B cell (primary cell): ENCODE measurements at regions of chr2 and their contacts with region 1.

Region 1: GRCh38 chr2:61905372-61906185 is at the start of gene COMMD1:
- DNase-seq: peak; percentile 87
- ATAC-seq: peak; percentile 99
- H3K4me3 ChIP-seq: peak within 1 kb of the TSS; percentile 61 to 97 (median 87)
- H3K4me3 Mint-ChIP-seq: peak within 1 kb of the TSS; percentile 91
- H3K27ac ChIP-seq: peak within 1 kb of the TSS; percentile 57 to 86
- H3K27ac Mint-ChIP-seq: peak within 1 kb of the TSS; percentile 90
- H3K4me1 ChIP-seq: peaks cover 7 to 8% of the 10 kb centered on the region in 2 donors
- H3K4me1 Mint-ChIP-seq: peaks cover 11% of the 10 kb centered on the region
- H3K27me3 ChIP-seq: no peaks in the 10 kb centered on the region
- H3K27me3 Mint-ChIP-seq: no peaks in the 10 kb centered on the region
- CTCF ChIP-seq: no peak
- total RNA-seq, gene COMMD1: 25.1 and 26.7 TPM in 2 replicates

Region 2: DNA sequence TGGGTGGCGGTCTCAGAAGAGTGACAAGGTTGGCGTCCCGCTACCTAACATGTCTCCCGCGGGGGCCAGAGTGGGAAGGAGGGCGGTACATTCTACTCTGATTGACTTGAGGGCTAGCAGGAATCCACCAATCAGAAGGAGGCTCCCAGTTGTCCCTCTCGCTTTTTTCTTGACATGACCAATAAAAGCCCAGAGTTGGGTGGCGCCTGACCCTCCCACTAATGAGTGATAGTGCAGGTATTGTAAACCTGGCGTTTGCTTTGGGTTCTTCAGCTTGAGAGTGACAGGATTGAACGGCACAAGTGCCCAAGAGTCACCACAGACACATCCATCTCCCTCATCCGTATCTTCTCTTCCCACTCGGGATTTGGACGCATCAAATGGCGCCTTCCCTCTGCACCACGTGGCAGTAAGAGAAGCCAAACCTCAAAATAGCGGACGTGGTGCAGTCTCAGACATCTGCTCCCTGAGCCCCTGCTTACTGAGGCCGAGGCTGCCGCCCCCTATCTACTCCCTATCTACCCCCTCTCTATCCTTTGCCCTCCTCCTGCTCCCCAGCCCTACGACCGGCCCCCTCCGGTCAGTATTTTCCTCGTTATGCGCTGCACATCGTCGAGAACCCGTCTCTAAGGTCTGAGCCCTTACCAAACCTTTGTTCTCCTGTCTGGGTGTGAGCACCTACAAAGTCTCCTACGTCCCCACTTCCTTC is 51.0 kb before region 1 on chr2:
- CTCF ChIA-PET with region 1: no interaction called
- POLR2A ChIA-PET with region 1: interaction called, 3 read pairs
- intact Hi-C with region 1: loop called (anchors 5 kb)
- DNase-seq: peak; percentile 96
- ATAC-seq: peak; percentile 83
- H3K4me3 ChIP-seq: peak overlapping the region; percentile 92 to 99 (median 98)
- H3K4me3 Mint-ChIP-seq: peak overlapping the region; percentile 94
- H3K27ac ChIP-seq: peak overlapping the region; percentile 56 to 68
- H3K27ac Mint-ChIP-seq: peak overlapping the region; percentile 92
- H3K4me1 ChIP-seq: peaks cover 11 to 16% of the 10 kb centered on the region in 2 donors
- H3K4me1 Mint-ChIP-seq: peaks cover 23% of the 10 kb centered on the region
- H3K27me3 ChIP-seq: no peaks in the 10 kb centered on the region
- H3K27me3 Mint-ChIP-seq: no peaks in the 10 kb centered on the region
- CTCF ChIP-seq: no peak

Region 3: DNA sequence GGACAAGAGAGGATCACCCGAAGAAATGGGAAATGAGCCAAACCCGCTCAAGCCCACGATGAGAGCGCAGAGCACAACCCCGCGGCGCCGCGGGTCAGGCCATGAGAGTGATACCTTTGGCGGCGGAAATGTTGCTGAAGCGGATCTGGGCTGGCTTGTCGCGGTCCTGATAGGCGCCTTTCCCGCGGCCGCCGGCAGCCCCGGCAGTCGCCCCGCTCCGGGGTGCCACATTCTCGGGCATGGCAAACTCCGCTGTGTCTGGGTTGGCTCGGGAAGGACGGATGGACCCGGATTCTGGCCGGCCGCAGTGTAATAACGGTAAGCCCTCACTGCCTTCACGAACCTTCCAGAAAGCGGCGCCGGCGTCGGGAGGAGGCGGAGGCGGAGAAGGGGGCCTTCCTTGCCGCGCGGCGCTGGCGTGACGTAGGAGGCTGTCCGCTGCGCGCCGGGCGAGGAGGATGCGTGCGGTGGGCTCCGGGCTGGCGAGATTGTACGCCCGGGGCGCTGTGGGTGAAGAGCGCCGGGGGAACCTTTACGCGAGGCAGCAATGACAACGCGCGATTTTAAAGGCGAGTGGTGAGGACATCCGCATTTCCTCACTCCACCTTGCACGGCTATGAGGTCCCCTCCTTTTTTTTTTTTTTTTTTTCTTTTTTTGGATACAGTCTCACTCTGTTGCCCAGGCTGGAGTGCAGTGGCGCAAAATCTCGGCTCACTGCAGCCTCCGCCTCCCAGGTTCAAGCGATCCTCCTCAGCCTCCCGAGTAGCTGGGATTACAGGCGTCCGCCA is 17.1 kb before region 1 on chr2 and contains the start of gene CCT4:
- CTCF ChIA-PET with region 1: no interaction called
- POLR2A ChIA-PET with region 1: no interaction called
- intact Hi-C with region 1: loop called (anchors 1 kb)
- DNase-seq: peak; percentile 98
- ATAC-seq: peak; percentile 85
- H3K4me3 ChIP-seq: peak within 1 kb of the TSS; percentile 79 to 92 (median 89)
- H3K4me3 Mint-ChIP-seq: peak within 1 kb of the TSS; percentile 100
- H3K27ac ChIP-seq: peak within 1 kb of the TSS; percentile 95 to 96
- H3K27ac Mint-ChIP-seq: peak within 1 kb of the TSS; percentile 100
- H3K4me1 ChIP-seq: peaks cover 11 to 25% of the 10 kb centered on the region in 2 donors
- H3K4me1 Mint-ChIP-seq: peaks cover 32% of the 10 kb centered on the region
- H3K27me3 ChIP-seq: no peaks in the 10 kb centered on the region
- H3K27me3 Mint-ChIP-seq: no peaks in the 10 kb centered on the region
- CTCF ChIP-seq: no peak
- total RNA-seq, gene CCT4: 86.4 and 88.0 TPM in 2 replicates

Region 4: GRCh38 chr2:63588385-63589147 is 1683.0 kb after region 1 on chr2 and contains the starts of genes MDH1 and WDPCP:
- CTCF ChIA-PET with region 1: no interaction called
- POLR2A ChIA-PET with region 1: no interaction called
- intact Hi-C with region 1: loop called (anchors 5 kb)
- DNase-seq: peak; percentile 98
- ATAC-seq: peak; percentile 84
- H3K4me3 ChIP-seq: peak within 1 kb of the TSS; percentile 93 to 98 (median 94)
- H3K4me3 Mint-ChIP-seq: peak within 1 kb of the TSS; percentile 91
- H3K27ac ChIP-seq: peak within 1 kb of the TSS; percentile 93 to 94
- H3K27ac Mint-ChIP-seq: peak within 1 kb of the TSS; percentile 93
- H3K4me1 ChIP-seq: peaks cover 14 to 19% of the 10 kb centered on the region in 2 donors
- H3K4me1 Mint-ChIP-seq: peaks cover 37% of the 10 kb centered on the region
- H3K27me3 ChIP-seq: no peaks in the 10 kb centered on the region
- H3K27me3 Mint-ChIP-seq: no peaks in the 10 kb centered on the region
- CTCF ChIP-seq: no peak
- total RNA-seq, gene MDH1: 87.8 and 95.6 TPM in 2 replicates
- total RNA-seq, gene WDPCP: 22.8 and 31.4 TPM in 2 replicates